Gastrocnemius medialis (tissue), 4 donors: ENCODE measurements at regions of chr15 and their contacts with region 1.

Region 1: DNA sequence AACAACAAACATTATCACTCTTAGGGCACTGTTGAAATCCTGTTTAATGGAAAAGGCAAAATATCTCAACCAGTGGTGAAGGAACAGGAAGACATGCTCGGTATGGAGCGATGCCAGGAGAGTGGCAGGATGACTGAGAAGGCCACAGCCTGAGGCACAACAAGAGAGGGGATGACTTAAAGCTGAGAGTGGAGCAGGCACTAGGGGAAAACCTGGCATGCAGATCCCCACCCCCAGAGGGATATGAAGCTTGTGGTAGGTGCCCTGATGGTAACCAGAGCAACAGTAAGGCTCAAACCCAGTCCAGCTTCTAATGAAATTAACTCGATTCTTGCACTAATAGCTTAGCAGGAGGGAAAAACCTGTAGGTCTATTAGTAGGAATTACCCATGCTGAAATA is 40.4 kb downstream of the LYSMD4 start:
- DNase-seq: no peak
- ATAC-seq: no peak
- H3K4me3 ChIP-seq: no peak overlapping the region
- H3K27ac ChIP-seq: no peak overlapping the region
- H3K4me1 ChIP-seq: no peaks in the 10 kb centered on the region
- H3K27me3 ChIP-seq: no peaks in the 10 kb centered on the region
- CTCF ChIP-seq: no peak
- POLR2A ChIP-seq: no peak

Region 2: GRCh38 chr15:99631255-99631654 is 61.6 kb before region 1 on chr15:
- in situ Hi-C with region 1: loop called in 1 of 4 experiments (anchors 10 kb)
- intact Hi-C with region 1: no loop called
- DNase-seq: no peak
- ATAC-seq: peak; percentile 85 to 92
- H3K4me3 ChIP-seq: peak overlapping the region in 1 of 4 donors; percentile 7
- H3K27ac ChIP-seq: peak overlapping the region; percentile 65 to 79 (median 70)
- H3K4me1 ChIP-seq: peaks cover 46 to 54% of the 10 kb centered on the region in 2 donors
- H3K27me3 ChIP-seq: no peaks in the 10 kb centered on the region
- CTCF ChIP-seq: no peak
- POLR2A ChIP-seq: no peak